A673 (cell line): ENCODE measurements at regions of chr17 and their contacts with region 1.

Region 1: GRCh38 chr17:47615766-47616424 is 33.8 kb upstream of the KPNB1 start:
- DNase-seq: peak; percentile 51
- H3K4me3 ChIP-seq: no peak overlapping the region
- H3K27ac ChIP-seq: no peak overlapping the region
- H3K4me1 ChIP-seq: no peaks in the 10 kb centered on the region
- H3K27me3 ChIP-seq: no peaks in the 10 kb centered on the region
- CTCF ChIP-seq: peak; percentile 59

Region 2: GRCh38 chr17:47188876-47189731 is 426.8 kb before region 1 on chr17 and contains the start of gene CDC27:
- CTCF ChIA-PET with region 1: no interaction called
- POLR2A ChIA-PET with region 1: no interaction called
- intact Hi-C with region 1: no loop called
- DNase-seq: peak; percentile 96
- H3K4me3 ChIP-seq: peak within 1 kb of the TSS; percentile 91
- H3K27ac ChIP-seq: peak within 1 kb of the TSS; percentile 87
- H3K4me1 ChIP-seq: peaks cover 6% of the 10 kb centered on the region
- H3K27me3 ChIP-seq: no peaks in the 10 kb centered on the region
- CTCF ChIP-seq: no peak
- total RNA-seq, gene CDC27: 95.9 and 120 TPM in 2 replicates

Region 3: GRCh38 chr17:47368262-47368661 is 247.6 kb before region 1 on chr17:
- CTCF ChIA-PET with region 1: no interaction called
- POLR2A ChIA-PET with region 1: no interaction called
- intact Hi-C with region 1: loop called (anchors 10 kb)
- DNase-seq: no peak
- H3K4me3 ChIP-seq: no peak overlapping the region
- H3K27ac ChIP-seq: no peak overlapping the region
- H3K4me1 ChIP-seq: no peaks in the 10 kb centered on the region
- H3K27me3 ChIP-seq: no peaks in the 10 kb centered on the region
- CTCF ChIP-seq: no peak

Region 4: GRCh38 chr17:47692895-47693733 is 77.2 kb after region 1 on chr17:
- CTCF ChIA-PET with region 1: interaction called, 12 read pairs
- POLR2A ChIA-PET with region 1: no interaction called
- intact Hi-C with region 1: no loop called
- DNase-seq: no peak
- H3K4me3 ChIP-seq: peak overlapping the region; percentile 60
- H3K27ac ChIP-seq: peak overlapping the region; percentile 47
- H3K4me1 ChIP-seq: peaks cover 6% of the 10 kb centered on the region
- H3K27me3 ChIP-seq: no peaks in the 10 kb centered on the region
- CTCF ChIP-seq: no peak

Region 5: DNA sequence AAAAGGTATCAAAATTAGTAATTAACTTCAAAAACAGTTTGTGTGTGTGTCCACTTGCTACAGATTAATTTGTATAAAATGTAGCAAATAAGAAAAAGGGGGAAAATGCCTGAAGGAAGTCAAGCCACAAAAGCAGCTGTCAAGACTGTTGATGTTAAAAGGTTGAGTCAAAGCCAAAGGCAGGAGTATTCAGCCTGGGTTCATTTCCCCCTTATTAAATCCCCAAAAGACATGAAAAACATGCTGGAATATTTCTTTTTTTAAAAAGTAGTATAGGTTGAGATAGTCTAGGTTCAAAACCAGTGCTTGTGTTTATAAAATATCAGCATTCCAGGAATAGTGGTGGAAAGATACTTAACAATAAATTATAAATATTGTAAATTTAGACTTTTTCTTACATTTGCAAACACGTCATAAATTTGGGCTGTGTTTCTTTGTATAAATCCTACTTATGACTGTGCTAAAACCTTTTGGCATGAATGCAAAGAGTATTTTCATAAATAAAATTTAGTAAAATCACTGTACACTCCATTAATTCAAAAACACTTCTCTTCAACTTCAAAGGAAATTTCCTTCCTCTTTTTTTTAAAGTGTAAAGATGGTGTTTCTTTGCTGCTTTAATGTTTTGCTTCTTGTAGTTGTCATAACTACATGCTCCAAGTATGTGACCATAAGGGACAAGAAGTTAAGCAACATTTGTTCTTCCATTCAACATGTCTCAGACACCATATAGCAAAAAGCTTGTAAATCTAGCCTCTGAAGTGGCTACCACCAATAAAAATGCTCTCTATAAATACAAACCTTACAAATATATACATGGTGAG is 742.1 kb after region 1 on chr17:
- CTCF ChIA-PET with region 1: no interaction called
- POLR2A ChIA-PET with region 1: no interaction called
- intact Hi-C with region 1: no loop called
- DNase-seq: no peak
- H3K4me3 ChIP-seq: no peak overlapping the region
- H3K27ac ChIP-seq: no peak overlapping the region
- H3K4me1 ChIP-seq: peaks cover 11% of the 10 kb centered on the region
- H3K27me3 ChIP-seq: peaks cover 3% of the 10 kb centered on the region
- CTCF ChIP-seq: no peak